HepG2 (cell line): ENCODE measurements at regions of chr17 and their contacts with region 1.

Region 1: GRCh38 chr17:927611-928461 is 51.7 kb downstream of the NXN start:
- DNase-seq: no peak
- ATAC-seq: no peak
- H3K4me3 ChIP-seq: no peak overlapping the region
- H3K27ac ChIP-seq: no peak overlapping the region
- H3K4me1 ChIP-seq: peaks cover 61% of the 10 kb centered on the region
- H3K27me3 ChIP-seq: no peaks in the 10 kb centered on the region
- CTCF ChIP-seq: no peak
- EP300 ChIP-seq: no peak
- POLR2A ChIP-seq: no peak
- RAD21 ChIP-seq: no peak

Region 2: GRCh38 chr17:863880-864279 is 64.0 kb before region 1 on chr17:
- CTCF ChIA-PET with region 1: no interaction called
- POLR2A ChIA-PET with region 1: no interaction called
- in situ Hi-C with region 1: no loop called
- intact Hi-C with region 1: loop called (anchors 2 kb)
- DNase-seq: no peak
- ATAC-seq: no peak
- H3K4me3 ChIP-seq: no peak overlapping the region
- H3K27ac ChIP-seq: no peak overlapping the region
- H3K4me1 ChIP-seq: peaks cover 8% of the 10 kb centered on the region
- H3K27me3 ChIP-seq: no peaks in the 10 kb centered on the region
- CTCF ChIP-seq: no peak
- EP300 ChIP-seq: no peak
- POLR2A ChIP-seq: no peak
- RAD21 ChIP-seq: no peak

Region 3: GRCh38 chr17:879549-880442 is 48.0 kb before region 1 on chr17:
- CTCF ChIA-PET with region 1: no interaction called
- POLR2A ChIA-PET with region 1: no interaction called
- in situ Hi-C with region 1: no loop called
- intact Hi-C with region 1: loop called (anchors 1 kb)
- DNase-seq: peak; percentile 45
- ATAC-seq: no peak
- H3K4me3 ChIP-seq: no peak overlapping the region
- H3K27ac ChIP-seq: no peak overlapping the region
- H3K4me1 ChIP-seq: peaks cover 24% of the 10 kb centered on the region
- H3K27me3 ChIP-seq: no peaks in the 10 kb centered on the region
- CTCF ChIP-seq: peak; percentile 50
- EP300 ChIP-seq: no peak
- POLR2A ChIP-seq: no peak
- RAD21 ChIP-seq: 0 out of 2 replicates have a peak, but pooled peaks have one; percentile 12

Region 4: DNA sequence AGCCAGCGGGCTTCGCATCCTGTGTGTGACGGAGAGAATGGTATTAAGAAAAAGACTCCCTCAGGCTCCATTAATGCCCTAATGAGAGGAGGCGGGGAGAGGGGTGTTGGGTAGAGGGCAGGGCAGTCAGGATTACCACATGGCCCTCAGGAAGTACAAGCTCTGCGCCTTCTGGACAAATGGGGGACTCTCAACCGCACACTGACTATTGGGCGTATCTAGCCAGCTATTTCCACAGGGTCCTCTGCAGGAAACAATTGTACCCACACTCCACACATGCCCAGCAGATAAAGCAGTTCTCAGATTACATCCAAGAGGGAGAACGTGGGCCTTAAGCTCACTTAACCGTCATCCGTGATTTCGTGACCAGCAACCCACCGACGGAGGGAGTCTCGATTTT is 37.0 kb after region 1 on chr17:
- CTCF ChIA-PET with region 1: no interaction called
- POLR2A ChIA-PET with region 1: no interaction called
- in situ Hi-C with region 1: no loop called
- intact Hi-C with region 1: no loop called
- DNase-seq: no peak
- ATAC-seq: no peak
- H3K4me3 ChIP-seq: no peak overlapping the region
- H3K27ac ChIP-seq: no peak overlapping the region
- H3K4me1 ChIP-seq: peaks cover 8% of the 10 kb centered on the region
- H3K27me3 ChIP-seq: no peaks in the 10 kb centered on the region
- CTCF ChIP-seq: no peak
- EP300 ChIP-seq: no peak
- POLR2A ChIP-seq: no peak
- RAD21 ChIP-seq: no peak

Region 5: GRCh38 chr17:992933-993332 is 65.1 kb after region 1 on chr17:
- CTCF ChIA-PET with region 1: no interaction called
- POLR2A ChIA-PET with region 1: no interaction called
- in situ Hi-C with region 1: no loop called
- intact Hi-C with region 1: no loop called
- DNase-seq: no peak
- ATAC-seq: no peak
- H3K4me3 ChIP-seq: no peak overlapping the region
- H3K27ac ChIP-seq: no peak overlapping the region
- H3K4me1 ChIP-seq: peaks cover 19% of the 10 kb centered on the region
- H3K27me3 ChIP-seq: peaks cover 0 to 3% of the 10 kb centered on the region in 2 experiments; a peak in 1 of 5 replicates
- CTCF ChIP-seq: no peak
- EP300 ChIP-seq: no peak
- POLR2A ChIP-seq: no peak
- RAD21 ChIP-seq: no peak